ENCODE measurements at regions of chr7 and their contacts with region 1.

Region 1: GRCh38 chr7:31134246-31135188 is 82.4 kb downstream of the ADCYAP1R1 start:
- DNase-seq: peak; percentile 84
- H3K4me3 Mint-ChIP-seq: no peak overlapping the region
- H3K27ac Mint-ChIP-seq: no peak overlapping the region
- H3K4me1 Mint-ChIP-seq: no peaks in the 10 kb centered on the region
- H3K27me3 Mint-ChIP-seq: peaks cover 26% of the 10 kb centered on the region
- CTCF ChIP-seq: peak; percentile 77

Region 2: DNA sequence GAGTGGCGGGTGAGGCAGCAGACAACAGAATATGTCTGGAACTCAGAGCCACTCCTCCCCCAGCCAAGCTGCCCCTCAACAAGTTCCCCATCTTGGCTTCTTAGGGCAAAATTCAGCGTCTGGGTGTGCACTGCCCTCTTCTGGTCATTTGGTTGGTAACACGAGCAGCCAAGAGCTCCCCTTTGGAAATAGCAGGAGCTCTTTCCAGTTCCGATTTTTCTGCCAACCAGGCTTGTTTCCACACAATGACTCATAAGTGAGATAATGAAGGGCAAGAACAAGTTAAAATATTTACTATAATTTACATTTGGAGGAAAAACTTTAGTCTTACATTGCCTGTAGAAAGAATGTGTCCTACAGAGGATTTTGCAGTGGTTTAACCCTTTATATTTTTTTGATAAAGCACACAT is 11.9 kb before region 1 on chr7:
- CTCF ChIA-PET with region 1: interaction called, 136 read pairs
- POLR2A ChIA-PET with region 1: no interaction called
- intact Hi-C with region 1: no loop called
- DNase-seq: peak; percentile 83
- H3K4me3 Mint-ChIP-seq: no peak overlapping the region
- H3K27ac Mint-ChIP-seq: no peak overlapping the region
- H3K4me1 Mint-ChIP-seq: peaks cover 6% of the 10 kb centered on the region
- H3K27me3 Mint-ChIP-seq: peaks cover 34% of the 10 kb centered on the region
- CTCF ChIP-seq: peak; percentile 85

Region 3: DNA sequence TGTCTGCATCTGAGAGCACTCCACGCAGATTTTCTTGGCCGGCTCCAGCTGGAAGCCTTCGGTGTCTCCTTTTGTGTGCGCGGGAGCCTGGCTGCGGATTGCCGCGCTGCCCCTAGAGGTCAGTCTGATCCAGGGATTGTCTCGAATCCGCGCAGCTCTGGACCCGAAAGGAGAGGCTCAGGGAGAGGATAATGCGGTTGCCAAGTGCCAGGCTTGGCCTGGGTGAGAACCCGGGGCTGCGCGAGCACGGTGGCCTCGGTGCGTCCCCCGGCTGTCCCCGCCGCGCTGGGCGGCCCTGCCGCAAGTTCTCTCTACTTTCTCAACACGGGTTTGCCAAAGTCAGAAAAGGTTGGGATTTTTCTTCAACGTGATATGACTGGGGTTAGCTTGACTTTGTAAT is 58.5 kb after region 1 on chr7:
- CTCF ChIA-PET with region 1: interaction called, 14 read pairs
- POLR2A ChIA-PET with region 1: interaction called, 3 read pairs
- intact Hi-C with region 1: no loop called
- DNase-seq: peak; percentile 64
- H3K4me3 Mint-ChIP-seq: no peak overlapping the region
- H3K27ac Mint-ChIP-seq: no peak overlapping the region
- H3K4me1 Mint-ChIP-seq: no peaks in the 10 kb centered on the region
- H3K27me3 Mint-ChIP-seq: peaks cover 22% of the 10 kb centered on the region
- CTCF ChIP-seq: peak; percentile 67

Region 4: GRCh38 chr7:31633894-31634494 is 499.5 kb after region 1 on chr7:
- CTCF ChIA-PET with region 1: interaction called, 94 read pairs
- POLR2A ChIA-PET with region 1: no interaction called
- intact Hi-C with region 1: loop called (anchors 2 kb)
- DNase-seq: peak; percentile 67
- H3K4me3 Mint-ChIP-seq: no peak overlapping the region
- H3K27ac Mint-ChIP-seq: no peak overlapping the region
- H3K4me1 Mint-ChIP-seq: no peaks in the 10 kb centered on the region
- H3K27me3 Mint-ChIP-seq: no peaks in the 10 kb centered on the region
- CTCF ChIP-seq: peak; percentile 76

Region 5: GRCh38 chr7:31744294-31744874 is 609.9 kb after region 1 on chr7:
- CTCF ChIA-PET with region 1: interaction called, 15 read pairs
- POLR2A ChIA-PET with region 1: no interaction called
- intact Hi-C with region 1: no loop called
- DNase-seq: peak; percentile 78
- H3K4me3 Mint-ChIP-seq: no peak overlapping the region
- H3K27ac Mint-ChIP-seq: no peak overlapping the region
- H3K4me1 Mint-ChIP-seq: peaks cover 5% of the 10 kb centered on the region
- H3K27me3 Mint-ChIP-seq: peaks cover 39% of the 10 kb centered on the region
- CTCF ChIP-seq: peak; percentile 92

Measured in MCF 10A (cell line).